ENCODE measurements at regions of chr17 and their contacts with region 1.

Region 1: GRCh38 chr17:5194346-5194745 is 2.7 kb upstream of the ZNF594 start:
- DNase-seq: no peak
- H3K4me3 Mint-ChIP-seq: no peak overlapping the region
- H3K27ac Mint-ChIP-seq: no peak overlapping the region
- H3K4me1 Mint-ChIP-seq: peaks cover 44% of the 10 kb centered on the region
- H3K27me3 Mint-ChIP-seq: no peaks in the 10 kb centered on the region

Region 2: DNA sequence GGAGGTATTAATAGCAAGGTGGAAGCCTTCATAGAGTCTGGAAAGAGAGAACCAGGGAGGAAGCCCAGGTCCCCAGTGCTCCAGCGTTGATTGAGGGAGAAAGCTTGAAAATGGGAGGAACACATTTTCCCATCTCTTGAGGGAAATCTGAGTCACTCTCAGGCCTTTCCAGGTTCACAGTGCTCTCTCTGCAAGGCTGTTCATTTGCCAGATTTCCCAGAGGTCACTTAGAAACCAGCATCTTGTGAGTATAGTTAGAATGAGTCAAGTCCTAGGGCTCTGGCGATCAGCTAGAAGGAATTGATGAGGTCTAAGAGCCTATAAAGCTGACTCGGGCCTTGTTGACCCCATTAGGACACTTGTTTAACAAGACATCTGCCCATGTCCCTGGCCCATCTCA is 15.1 kb after region 1 on chr17:
- CTCF ChIA-PET with region 1: no interaction called
- DNase-seq: no peak
- H3K4me3 Mint-ChIP-seq: no peak overlapping the region
- H3K27ac Mint-ChIP-seq: no peak overlapping the region
- H3K4me1 Mint-ChIP-seq: no peaks in the 10 kb centered on the region
- H3K27me3 Mint-ChIP-seq: no peaks in the 10 kb centered on the region

Region 3: GRCh38 chr17:5237541-5238016 is 43.2 kb after region 1 on chr17:
- CTCF ChIA-PET with region 1: interaction called, 12 read pairs
- DNase-seq: peak; percentile 59
- H3K4me3 Mint-ChIP-seq: no peak overlapping the region
- H3K27ac Mint-ChIP-seq: no peak overlapping the region
- H3K4me1 Mint-ChIP-seq: peaks cover 22% of the 10 kb centered on the region
- H3K27me3 Mint-ChIP-seq: no peaks in the 10 kb centered on the region